ENCODE measurements at regions of chr1 and their contacts with region 1.

Region 1: DNA sequence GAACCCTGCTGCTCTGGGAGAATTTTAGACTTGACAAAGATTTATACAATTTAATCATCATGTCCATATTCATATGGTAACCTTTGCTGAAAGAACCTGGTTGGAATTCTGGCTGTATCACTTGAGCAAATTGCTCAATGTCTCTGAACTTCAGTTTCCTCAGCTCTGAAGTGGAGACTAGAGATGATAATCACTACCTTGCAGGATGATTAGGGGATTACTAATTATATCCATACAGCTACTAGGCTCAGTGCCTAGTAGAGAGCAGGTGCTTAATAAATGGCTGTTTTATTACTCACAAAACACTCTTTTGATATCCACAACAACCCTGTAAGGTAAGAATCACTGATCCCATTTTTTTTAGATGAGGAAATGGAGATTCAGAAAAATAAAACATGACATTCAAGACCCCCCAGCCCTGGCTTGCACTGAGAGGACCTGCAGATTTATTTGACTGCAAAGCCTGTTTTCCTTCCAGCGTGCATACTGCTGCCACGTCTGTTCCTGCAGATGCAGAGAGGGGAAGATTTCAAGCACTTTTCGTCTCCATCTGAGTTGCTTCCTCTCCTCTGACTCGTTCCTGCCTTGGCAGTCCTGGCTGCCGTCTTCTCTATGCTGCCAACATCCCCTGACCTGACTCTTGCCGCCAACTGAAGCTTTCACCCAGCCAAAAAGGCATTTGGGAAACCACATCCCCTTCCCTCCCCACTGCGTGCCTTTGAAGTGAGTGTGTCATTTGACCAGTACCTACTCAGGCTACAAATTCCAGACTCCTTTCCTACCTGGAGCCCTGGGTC is 203.0 kb downstream of the PLPP3 start:
- DNase-seq: peak; percentile 81 to 91
- H3K4me3 ChIP-seq: peak overlapping the region; percentile 23; the same call in 1 of the 2 replicates
- H3K27ac ChIP-seq: peak overlapping the region; percentile 83
- H3K4me1 ChIP-seq: peaks cover 51% of the 10 kb centered on the region
- H3K27me3 ChIP-seq: no peaks in the 10 kb centered on the region
- CTCF ChIP-seq: no peak

Region 2: DNA sequence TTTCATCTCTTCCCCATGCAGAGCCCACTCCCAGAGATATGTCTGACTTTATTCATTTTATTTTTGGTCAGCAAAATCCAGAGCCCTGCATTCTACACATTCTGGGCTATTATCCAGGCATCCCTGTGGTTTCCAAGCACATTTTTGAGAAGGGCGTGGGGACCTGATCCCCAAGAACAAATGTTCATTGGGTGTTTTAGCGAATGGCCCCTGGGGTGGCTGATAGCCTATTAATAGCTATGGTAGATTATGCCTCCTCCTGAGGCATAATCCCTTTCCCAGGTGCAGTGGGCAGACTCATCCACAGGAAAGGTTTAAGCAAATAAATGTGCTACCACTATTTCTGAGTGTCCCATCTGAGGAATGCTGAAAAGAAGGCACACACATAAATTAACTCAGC is 649.4 kb before region 1 on chr1:
- CTCF ChIA-PET with region 1: no interaction called
- POLR2A ChIA-PET with region 1: no interaction called
- intact Hi-C with region 1: loop called (anchors 5 kb)
- DNase-seq: peak; percentile 77 to 89
- H3K4me3 ChIP-seq: no peak overlapping the region
- H3K27ac ChIP-seq: peak overlapping the region; percentile 70
- H3K4me1 ChIP-seq: peaks cover 37% of the 10 kb centered on the region
- H3K27me3 ChIP-seq: no peaks in the 10 kb centered on the region
- CTCF ChIP-seq: no peak

Region 3: DNA sequence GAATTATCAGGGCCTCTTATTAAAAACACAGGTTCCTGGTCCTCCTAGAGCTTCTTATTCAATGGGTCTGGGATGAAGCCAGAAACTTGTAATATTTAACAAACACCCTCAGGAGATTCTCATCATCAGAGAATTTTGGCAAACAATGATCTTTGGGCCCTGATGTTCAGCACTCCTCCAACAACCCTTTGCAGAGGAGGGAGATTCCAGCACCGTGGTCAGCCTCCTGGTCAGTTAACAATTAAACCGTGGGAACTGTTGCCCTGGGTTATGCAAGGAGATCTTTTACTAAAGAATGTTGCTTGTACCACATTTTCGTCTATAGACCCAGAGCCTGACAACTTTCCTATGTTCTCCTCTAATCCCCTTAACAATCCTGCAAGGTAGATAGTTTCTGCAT is 91.5 kb before region 1 on chr1:
- CTCF ChIA-PET with region 1: no interaction called
- POLR2A ChIA-PET with region 1: no interaction called
- intact Hi-C with region 1: loop called (anchors 2 kb)
- DNase-seq: peak; percentile 36 to 90
- H3K4me3 ChIP-seq: no peak overlapping the region
- H3K27ac ChIP-seq: peak overlapping the region; percentile 89
- H3K4me1 ChIP-seq: peaks cover 48% of the 10 kb centered on the region
- H3K27me3 ChIP-seq: no peaks in the 10 kb centered on the region
- CTCF ChIP-seq: no peak

Region 4: GRCh38 chr1:56330391-56331026 is 45.9 kb before region 1 on chr1:
- CTCF ChIA-PET with region 1: no interaction called
- POLR2A ChIA-PET with region 1: no interaction called
- intact Hi-C with region 1: loop called (anchors 2 kb)
- DNase-seq: peak in 1 of 2 experiments; percentile 46
- H3K4me3 ChIP-seq: no peak overlapping the region
- H3K27ac ChIP-seq: peak overlapping the region; percentile 55
- H3K4me1 ChIP-seq: peaks cover 46% of the 10 kb centered on the region
- H3K27me3 ChIP-seq: no peaks in the 10 kb centered on the region
- CTCF ChIP-seq: no peak

Region 5: GRCh38 chr1:56390227-56390867 is 14.0 kb after region 1 on chr1:
- CTCF ChIA-PET with region 1: no interaction called
- POLR2A ChIA-PET with region 1: no interaction called
- intact Hi-C with region 1: loop called (anchors 1 kb)
- DNase-seq: no peak
- H3K4me3 ChIP-seq: no peak overlapping the region
- H3K27ac ChIP-seq: peak overlapping the region; percentile 76
- H3K4me1 ChIP-seq: peaks cover 55% of the 10 kb centered on the region
- H3K27me3 ChIP-seq: no peaks in the 10 kb centered on the region
- CTCF ChIP-seq: no peak

Region 6: DNA sequence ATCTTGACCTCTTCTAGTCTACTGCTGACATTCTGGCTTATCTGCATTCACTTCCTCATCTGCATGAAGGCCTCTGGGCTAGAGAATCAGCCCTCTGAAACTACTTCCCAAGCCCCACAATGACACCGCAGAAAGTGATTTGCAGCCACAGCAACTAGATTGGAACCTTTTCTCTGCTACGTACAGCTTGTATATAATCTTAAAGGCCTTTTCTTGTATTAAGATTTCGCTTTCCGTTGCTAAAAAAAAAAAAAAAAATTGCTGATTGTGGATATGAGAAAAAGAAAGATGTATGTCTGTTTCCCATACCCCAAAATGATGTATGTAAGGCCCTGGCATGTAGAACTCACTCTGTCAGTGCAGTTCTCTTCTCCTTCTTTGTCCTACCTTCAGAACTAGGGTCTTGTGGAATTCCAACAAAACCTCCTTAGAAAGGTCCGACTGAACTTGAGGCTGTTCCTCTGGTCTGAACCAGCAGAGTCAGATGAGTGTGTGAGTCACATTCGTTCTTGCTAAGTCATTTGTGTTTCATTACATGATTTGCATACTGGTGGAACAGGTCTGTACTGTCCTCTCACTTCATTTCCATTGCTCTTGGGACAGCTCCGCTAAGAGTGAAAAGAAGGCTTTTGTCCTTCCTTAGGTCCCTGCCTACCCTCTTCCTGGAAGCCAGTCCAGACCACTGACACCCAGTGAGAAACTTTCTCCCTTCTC is 140.3 kb after region 1 on chr1:
- CTCF ChIA-PET with region 1: no interaction called
- POLR2A ChIA-PET with region 1: no interaction called
- intact Hi-C with region 1: loop called (anchors 5 kb)
- DNase-seq: peak; percentile 59 to 96
- H3K4me3 ChIP-seq: peak overlapping the region; percentile 60
- H3K27ac ChIP-seq: peak overlapping the region; percentile 99
- H3K4me1 ChIP-seq: peaks cover 41% of the 10 kb centered on the region
- H3K27me3 ChIP-seq: no peaks in the 10 kb centered on the region
- CTCF ChIP-seq: no peak

Measured in PC-9 (cell line).